Mammary epithelial cell (primary cell): ENCODE measurements at regions of chr11 and their contacts with region 1.

Region 1: GRCh38 chr11:117039900-117040299 is 58.3 kb downstream of the SIK3 start:
- DNase-seq: peak; percentile 83
- H3K4me3 ChIP-seq: no peak overlapping the region
- H3K27ac ChIP-seq: peak overlapping the region; percentile 42
- H3K4me1 ChIP-seq: peaks cover 31% of the 10 kb centered on the region
- H3K27me3 ChIP-seq: no peaks in the 10 kb centered on the region
- CTCF ChIP-seq: no peak

Region 2: GRCh38 chr11:116990061-116990473 is 49.8 kb before region 1 on chr11:
- CTCF ChIA-PET with region 1: no interaction called
- dilution Hi-C with region 1: no loop called
- in situ Hi-C with region 1: no loop called
- intact Hi-C with region 1: no loop called
- DNase-seq: peak; percentile 71
- H3K4me3 ChIP-seq: no peak overlapping the region
- H3K27ac ChIP-seq: peak overlapping the region; percentile 32
- H3K4me1 ChIP-seq: peaks cover 39% of the 10 kb centered on the region
- H3K27me3 ChIP-seq: no peaks in the 10 kb centered on the region
- CTCF ChIP-seq: no peak

Region 3: DNA sequence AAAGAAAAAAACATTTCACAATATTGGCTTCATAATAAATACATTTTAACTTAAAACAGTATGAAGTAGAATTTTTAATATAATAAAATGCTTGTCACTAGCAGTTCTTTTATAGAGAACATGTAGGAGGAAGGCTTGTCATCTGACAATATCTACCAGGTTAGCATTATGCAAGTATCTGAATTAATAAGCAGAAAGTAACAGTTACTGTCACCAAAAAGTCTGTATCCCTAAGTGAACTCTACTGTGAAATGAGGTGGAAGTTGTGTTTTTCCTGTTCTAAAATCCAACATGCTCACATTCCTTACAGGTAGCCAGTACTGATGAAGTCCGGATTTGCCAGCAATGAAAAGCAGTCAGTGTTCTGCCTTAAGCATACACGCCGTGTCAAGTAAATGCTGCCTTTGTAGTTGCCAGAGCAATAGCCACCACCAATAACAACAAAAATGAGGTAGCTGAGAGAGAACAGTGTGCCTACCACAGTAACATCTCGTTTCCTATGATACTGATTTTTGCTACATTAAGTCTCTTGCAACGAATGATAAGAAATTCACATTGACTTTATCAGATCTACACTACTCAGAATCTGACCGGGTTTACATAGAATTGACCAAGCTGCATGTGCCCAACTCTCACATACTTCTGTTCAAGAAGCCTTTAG is 37.1 kb before region 1 on chr11:
- CTCF ChIA-PET with region 1: no interaction called
- dilution Hi-C with region 1: loop called (anchors 5 kb)
- in situ Hi-C with region 1: no loop called
- intact Hi-C with region 1: no loop called
- DNase-seq: peak; percentile 42
- H3K4me3 ChIP-seq: no peak overlapping the region
- H3K27ac ChIP-seq: peak overlapping the region; percentile 12
- H3K4me1 ChIP-seq: peaks cover 10% of the 10 kb centered on the region
- H3K27me3 ChIP-seq: no peaks in the 10 kb centered on the region
- CTCF ChIP-seq: no peak

Region 4: GRCh38 chr11:117295438-117296137 is 255.7 kb after region 1 on chr11:
- CTCF ChIA-PET with region 1: no interaction called
- dilution Hi-C with region 1: no loop called
- in situ Hi-C with region 1: no loop called
- intact Hi-C with region 1: no loop called
- DNase-seq: no peak
- H3K4me3 ChIP-seq: no peak overlapping the region
- H3K27ac ChIP-seq: no peak overlapping the region
- H3K4me1 ChIP-seq: no peaks in the 10 kb centered on the region
- H3K27me3 ChIP-seq: no peaks in the 10 kb centered on the region
- CTCF ChIP-seq: no peak

Region 5: GRCh38 chr11:117408356-117408755 is 368.5 kb after region 1 on chr11:
- CTCF ChIA-PET with region 1: no interaction called
- dilution Hi-C with region 1: no loop called
- in situ Hi-C with region 1: no loop called
- intact Hi-C with region 1: no loop called
- DNase-seq: no peak
- H3K4me3 ChIP-seq: no peak overlapping the region
- H3K27ac ChIP-seq: no peak overlapping the region
- H3K4me1 ChIP-seq: no peaks in the 10 kb centered on the region
- H3K27me3 ChIP-seq: no peaks in the 10 kb centered on the region
- CTCF ChIP-seq: no peak